ENCODE measurements at regions of chr16 and their contacts with region 1.

Region 1: GRCh38 chr16:6753553-6753952 is 579.1 kb upstream of the RBFOX1 start:
- DNase-seq: no peak
- H3K4me3 ChIP-seq: no peak overlapping the region
- H3K27ac ChIP-seq: no peak overlapping the region
- H3K4me1 ChIP-seq: no peaks in the 10 kb centered on the region
- H3K27me3 ChIP-seq: no peaks in the 10 kb centered on the region
- CTCF ChIP-seq: no peak
- POLR2A ChIP-seq: no peak

Region 2: DNA sequence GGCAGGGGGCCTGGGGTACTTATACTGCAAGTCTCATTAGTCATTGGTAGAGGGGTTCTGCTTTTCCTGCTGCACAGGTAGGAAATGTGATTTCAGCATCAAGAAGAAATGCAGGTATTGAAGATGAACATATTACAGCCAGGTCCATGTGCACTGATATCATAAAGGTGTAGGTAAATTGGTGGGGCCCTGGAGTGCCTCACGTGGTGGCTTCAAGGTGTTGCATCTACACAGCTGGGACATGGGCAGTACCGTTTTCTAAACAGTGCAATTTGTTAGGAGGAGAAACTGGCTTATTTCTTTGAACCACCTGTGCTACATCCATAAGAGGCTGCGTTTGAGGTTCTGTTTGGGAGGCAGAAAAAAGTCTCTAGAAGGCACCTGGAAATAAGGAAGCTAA is 39.0 kb before region 1 on chr16:
- intact Hi-C with region 1: no loop called
- DNase-seq: no peak
- H3K4me3 ChIP-seq: no peak overlapping the region
- H3K27ac ChIP-seq: no peak overlapping the region
- H3K4me1 ChIP-seq: no peaks in the 10 kb centered on the region
- H3K27me3 ChIP-seq: no peaks in the 10 kb centered on the region
- CTCF ChIP-seq: no peak
- POLR2A ChIP-seq: no peak

Region 3: DNA sequence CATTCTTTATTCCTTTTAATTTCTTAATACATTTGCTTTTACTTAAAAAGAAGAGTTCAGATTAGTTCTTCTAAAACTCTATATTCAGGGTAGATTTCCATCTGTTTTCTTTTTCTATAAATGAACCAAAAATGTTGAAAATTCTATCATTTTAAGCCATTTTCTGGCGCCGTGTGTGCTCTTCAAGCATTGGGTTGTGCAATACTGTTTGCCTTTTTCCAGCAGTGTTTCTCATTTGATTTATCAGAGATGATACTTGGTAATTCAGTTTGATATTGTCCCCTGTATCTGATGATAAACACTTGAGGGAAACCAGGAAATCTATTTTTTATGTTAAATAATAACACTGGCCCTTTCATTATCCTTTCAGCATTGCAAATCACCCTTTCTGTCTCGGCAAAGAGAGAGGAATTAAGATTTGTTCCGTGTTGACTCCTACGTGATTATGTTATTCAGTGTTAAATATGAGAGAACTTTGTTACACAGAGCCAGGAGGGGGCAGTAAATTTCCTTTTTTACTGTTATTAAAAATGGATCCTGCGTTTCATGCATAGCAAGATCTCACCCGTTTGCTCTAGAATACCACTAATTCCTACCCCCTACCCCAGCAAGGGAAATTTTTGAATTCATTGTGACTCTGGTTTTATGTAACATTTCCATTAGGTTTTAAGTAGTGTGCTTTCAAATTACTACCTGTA is 27.8 kb before region 1 on chr16:
- intact Hi-C with region 1: loop called (anchors 1 kb)
- DNase-seq: no peak
- H3K4me3 ChIP-seq: no peak overlapping the region
- H3K27ac ChIP-seq: no peak overlapping the region
- H3K4me1 ChIP-seq: no peaks in the 10 kb centered on the region
- H3K27me3 ChIP-seq: no peaks in the 10 kb centered on the region
- CTCF ChIP-seq: no peak
- POLR2A ChIP-seq: no peak

Region 4: GRCh38 chr16:6822041-6822440 is 68.5 kb after region 1 on chr16:
- intact Hi-C with region 1: no loop called
- DNase-seq: no peak
- H3K4me3 ChIP-seq: no peak overlapping the region
- H3K27ac ChIP-seq: no peak overlapping the region
- H3K4me1 ChIP-seq: no peaks in the 10 kb centered on the region
- H3K27me3 ChIP-seq: no peaks in the 10 kb centered on the region
- CTCF ChIP-seq: no peak
- POLR2A ChIP-seq: no peak